HAP-1 (cell line): ENCODE measurements at regions of chr11 and their contacts with region 1.

Region 1: DNA sequence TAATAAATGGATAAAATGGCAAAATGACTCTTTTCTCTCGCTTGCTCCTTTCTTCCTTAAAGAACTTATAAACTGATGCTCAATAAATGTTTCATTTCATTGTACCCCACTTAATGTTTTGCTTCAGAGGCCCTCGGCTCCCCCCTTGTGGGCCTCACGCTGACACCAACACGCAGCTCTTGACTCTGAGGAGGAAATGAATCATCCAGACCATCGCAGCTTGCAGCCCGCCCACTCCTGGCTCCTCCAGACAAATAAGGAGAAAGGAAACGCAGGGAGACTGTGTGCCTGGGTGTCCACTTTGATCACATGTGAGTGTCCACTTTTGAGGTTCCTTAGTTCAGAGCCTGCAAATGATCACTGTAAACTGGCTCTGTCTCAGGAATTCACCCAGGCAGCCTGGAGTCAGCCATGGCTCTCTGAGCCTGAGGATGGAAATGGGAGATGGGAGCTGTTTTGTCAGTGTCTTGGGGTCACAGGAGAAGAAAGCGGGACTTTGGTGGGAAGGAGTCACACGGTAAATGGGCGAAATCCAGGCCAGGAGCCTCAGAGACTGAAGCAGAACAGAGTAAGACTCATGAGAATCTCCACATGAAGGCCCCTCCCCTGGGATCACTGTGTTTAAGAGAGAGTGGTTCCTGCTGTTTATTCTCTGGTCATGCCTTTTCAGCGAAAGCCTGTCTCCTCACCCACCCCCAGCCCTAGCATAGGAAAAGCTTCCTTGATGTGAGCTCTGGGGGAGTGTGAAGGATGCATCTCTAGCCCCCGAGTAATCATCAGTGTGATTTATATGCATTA is 96.5 kb downstream of the CWC15 start:
- DNase-seq: no peak
- H3K4me3 ChIP-seq: no peak overlapping the region
- H3K4me1 ChIP-seq: no peaks in the 10 kb centered on the region
- H3K27me3 ChIP-seq: no peaks in the 10 kb centered on the region

Region 2: DNA sequence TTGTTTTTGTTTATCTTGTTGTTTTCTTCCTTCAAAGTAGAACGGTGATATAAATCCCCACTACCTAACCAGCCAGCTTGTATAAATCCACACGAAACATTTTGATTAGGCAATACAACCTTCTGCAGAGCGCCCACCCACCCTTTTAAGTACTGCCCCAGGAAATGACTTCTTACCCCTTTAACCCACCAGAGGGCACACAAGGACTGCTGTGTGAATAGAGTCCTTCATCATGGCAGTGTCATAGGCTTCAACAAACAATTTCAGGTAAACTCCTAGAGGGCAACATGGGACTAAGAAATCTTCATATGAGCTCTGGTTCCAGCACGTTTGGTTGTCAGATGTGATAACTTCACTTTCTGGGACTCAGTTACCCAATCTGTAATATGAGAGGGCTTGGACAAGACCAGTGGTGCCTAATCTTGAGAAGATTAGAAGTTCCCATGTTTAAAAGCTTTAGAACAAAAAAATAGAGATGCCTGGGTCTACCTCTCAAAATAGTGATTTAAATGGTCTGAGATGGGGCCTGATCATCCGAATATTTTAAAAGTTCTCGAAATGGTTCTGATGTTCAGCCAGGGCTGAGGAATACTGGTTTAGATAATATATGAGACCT is 253.6 kb before region 1 on chr11:
- in situ Hi-C with region 1: loop called (anchors 25 kb)
- DNase-seq: peak; percentile 60 to 75
- H3K4me3 ChIP-seq: no peak overlapping the region
- H3K4me1 ChIP-seq: no peaks in the 10 kb centered on the region
- H3K27me3 ChIP-seq: 0 out of 2 replicates have a peak, but pooled peaks cover 3% of the 10 kb centered on the region

Region 3: GRCh38 chr11:95108159-95108611 is 231.3 kb after region 1 on chr11:
- in situ Hi-C with region 1: no loop called
- DNase-seq: no peak
- H3K4me3 ChIP-seq: no peak overlapping the region
- H3K4me1 ChIP-seq: no peaks in the 10 kb centered on the region
- H3K27me3 ChIP-seq: no peaks in the 10 kb centered on the region

Region 4: GRCh38 chr11:95429376-95429907 is 552.6 kb after region 1 on chr11:
- in situ Hi-C with region 1: no loop called
- DNase-seq: no peak
- H3K4me3 ChIP-seq: no peak overlapping the region
- H3K4me1 ChIP-seq: peaks cover 7% of the 10 kb centered on the region; the same call in 1 of the 2 replicates
- H3K27me3 ChIP-seq: no peaks in the 10 kb centered on the region; the same call in 1 of the 2 replicates